OCI-LY7 (cell line): ENCODE measurements at regions of chr12 and their contacts with region 1.

Region 1: DNA sequence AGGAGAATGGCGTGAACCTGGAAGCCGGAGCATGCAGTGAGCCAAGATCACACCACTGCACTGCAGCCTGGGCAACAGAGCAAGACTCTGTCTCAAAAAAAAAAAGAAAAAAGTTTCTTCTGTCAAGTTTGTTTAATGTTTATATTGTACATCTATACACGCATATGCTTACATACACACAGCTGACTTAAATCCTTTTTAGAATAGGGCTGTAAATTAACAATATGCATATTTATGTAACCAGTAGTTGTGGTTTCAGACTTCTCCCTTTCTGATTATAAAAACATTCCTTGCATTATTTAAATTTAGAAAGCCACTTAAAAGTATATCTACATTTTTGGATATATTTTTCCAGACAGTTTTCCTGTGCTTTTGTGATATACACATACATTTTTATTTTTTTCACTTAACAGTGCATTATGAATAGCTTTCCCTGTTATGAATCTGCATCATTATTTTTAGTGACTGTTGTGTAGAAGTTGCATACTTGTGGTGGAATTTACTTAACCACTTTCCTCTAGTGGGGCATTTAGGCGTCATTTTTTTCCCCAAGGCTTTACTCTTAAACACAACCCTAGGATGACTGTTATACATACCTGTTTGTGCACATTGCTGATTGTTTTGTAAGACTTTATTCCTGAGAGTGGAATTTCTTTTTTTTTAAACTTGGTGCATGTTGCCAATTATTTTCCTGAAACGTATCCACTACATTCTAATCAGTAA is 29.4 kb downstream of the POLR3B start:
- DNase-seq: no peak
- H3K4me3 ChIP-seq: no peak overlapping the region
- H3K27ac ChIP-seq: no peak overlapping the region
- H3K4me1 ChIP-seq: no peaks in the 10 kb centered on the region
- CTCF ChIP-seq: no peak

Region 2: DNA sequence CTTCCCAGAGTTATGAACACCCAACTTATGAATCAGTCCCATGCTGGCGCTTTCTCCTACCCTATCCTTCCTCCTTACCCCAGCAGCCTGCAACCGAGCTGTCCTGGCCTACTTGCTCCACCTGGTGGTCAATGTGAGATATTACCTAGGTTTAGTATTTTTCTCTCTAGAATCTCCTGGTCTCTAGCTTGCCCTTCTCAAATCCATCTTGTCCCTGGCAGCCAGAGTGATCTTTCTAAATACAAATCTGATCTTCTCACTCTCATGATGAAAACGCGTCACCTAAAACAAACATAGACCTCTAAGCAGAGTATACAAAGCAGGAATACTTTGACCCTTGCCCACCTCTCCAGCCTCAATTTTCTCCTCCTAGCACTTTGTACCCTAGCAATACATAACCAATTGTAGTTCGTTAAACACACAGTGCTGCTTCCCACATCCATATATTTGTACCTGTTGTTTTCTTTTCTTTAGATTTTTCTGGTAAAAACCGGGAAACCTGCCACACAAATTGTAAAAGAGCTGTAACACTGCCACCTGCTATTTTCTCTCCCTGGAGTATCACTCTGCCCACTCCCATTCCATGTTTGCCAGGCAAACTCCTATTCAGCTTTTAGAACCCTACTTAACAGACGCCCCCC is 104.4 kb before region 1 on chr12:
- CTCF ChIA-PET with region 1: no interaction called
- POLR2A ChIA-PET with region 1: no interaction called
- intact Hi-C with region 1: no loop called
- DNase-seq: peak; percentile 82
- H3K4me3 ChIP-seq: no peak overlapping the region
- H3K27ac ChIP-seq: no peak overlapping the region
- H3K4me1 ChIP-seq: peaks cover 9% of the 10 kb centered on the region
- CTCF ChIP-seq: peak; percentile 94

Region 3: GRCh38 chr12:106841510-106842302 is 454.7 kb after region 1 on chr12:
- CTCF ChIA-PET with region 1: interaction called, 3 read pairs
- POLR2A ChIA-PET with region 1: no interaction called
- intact Hi-C with region 1: loop called (anchors 2 kb)
- DNase-seq: peak; percentile 62
- H3K4me3 ChIP-seq: no peak overlapping the region
- H3K27ac ChIP-seq: no peak overlapping the region
- H3K4me1 ChIP-seq: no peaks in the 10 kb centered on the region
- CTCF ChIP-seq: peak; percentile 94

Region 4: DNA sequence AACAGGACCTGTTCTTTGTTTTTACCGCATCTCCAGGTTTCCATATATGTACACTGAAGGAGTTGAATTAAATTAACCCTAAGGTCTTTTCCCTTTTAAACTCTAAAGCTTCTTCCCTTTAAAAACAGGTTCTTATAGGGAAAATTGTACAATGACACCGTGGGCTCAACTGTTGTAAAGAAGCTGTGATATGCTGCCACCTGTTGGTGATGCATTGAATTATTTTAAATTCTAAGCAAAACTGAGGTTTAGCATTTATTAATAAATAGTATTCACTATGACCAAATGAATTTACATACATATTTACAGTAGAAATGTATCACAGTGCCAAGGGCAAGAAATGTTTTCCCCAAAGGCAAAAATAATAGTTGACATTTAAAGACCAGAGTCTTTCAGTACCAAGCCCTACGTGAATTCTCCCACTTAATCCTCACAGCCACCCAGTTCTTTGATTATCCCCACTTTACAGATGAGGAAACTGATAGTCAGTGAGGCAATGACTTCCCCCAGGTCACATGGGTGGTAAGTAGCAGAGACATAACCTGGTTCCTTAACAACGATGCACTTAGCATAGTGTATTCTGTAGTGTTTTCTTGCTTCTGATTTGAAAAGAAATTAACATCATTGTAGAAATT is 533.1 kb after region 1 on chr12:
- CTCF ChIA-PET with region 1: no interaction called
- POLR2A ChIA-PET with region 1: no interaction called
- intact Hi-C with region 1: loop called (anchors 2 kb)
- DNase-seq: peak; percentile 57
- H3K4me3 ChIP-seq: no peak overlapping the region
- H3K27ac ChIP-seq: no peak overlapping the region
- H3K4me1 ChIP-seq: no peaks in the 10 kb centered on the region
- CTCF ChIP-seq: peak; percentile 92